OCI-LY7 (cell line): ENCODE measurements at regions of chr7 and their contacts with region 1.

Region 1: DNA sequence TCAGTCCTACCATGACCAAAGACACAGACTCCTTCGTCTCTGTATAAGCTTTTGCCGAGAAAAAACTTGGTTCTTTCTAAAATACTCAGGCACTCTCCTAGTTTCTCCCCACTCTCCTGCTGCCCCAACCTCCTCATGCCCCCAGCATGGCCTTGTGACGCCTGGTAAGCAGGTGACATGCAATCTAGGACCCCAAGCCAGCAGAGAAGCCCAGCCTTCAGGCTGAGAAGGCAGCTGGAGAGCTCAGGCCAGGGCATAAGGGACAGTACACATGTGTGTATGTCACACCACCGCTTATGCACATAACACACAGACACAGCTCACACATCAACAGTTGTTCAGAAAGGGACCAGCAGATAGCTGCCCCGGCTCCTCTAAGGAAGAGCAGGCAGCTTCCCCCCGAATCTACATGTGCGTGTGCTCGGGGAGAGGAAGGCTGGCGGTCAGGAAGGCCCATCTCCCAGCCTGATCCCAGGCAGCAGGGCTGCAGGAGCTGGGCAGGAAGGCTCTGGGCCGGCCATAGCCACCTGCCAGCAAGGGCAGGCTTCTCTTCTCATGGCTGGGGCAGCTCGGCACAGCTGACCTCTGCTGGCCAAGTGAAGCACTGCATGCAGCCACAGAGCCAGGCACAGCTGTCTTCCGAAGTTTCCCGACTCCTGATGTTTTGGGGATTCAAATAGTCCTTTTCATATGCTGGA is 8.5 kb downstream of the DDX56 start:
- DNase-seq: peak; percentile 65
- H3K4me3 ChIP-seq: no peak overlapping the region
- H3K27ac ChIP-seq: no peak overlapping the region
- H3K4me1 ChIP-seq: no peaks in the 10 kb centered on the region
- CTCF ChIP-seq: peak; percentile 94

Region 2: DNA sequence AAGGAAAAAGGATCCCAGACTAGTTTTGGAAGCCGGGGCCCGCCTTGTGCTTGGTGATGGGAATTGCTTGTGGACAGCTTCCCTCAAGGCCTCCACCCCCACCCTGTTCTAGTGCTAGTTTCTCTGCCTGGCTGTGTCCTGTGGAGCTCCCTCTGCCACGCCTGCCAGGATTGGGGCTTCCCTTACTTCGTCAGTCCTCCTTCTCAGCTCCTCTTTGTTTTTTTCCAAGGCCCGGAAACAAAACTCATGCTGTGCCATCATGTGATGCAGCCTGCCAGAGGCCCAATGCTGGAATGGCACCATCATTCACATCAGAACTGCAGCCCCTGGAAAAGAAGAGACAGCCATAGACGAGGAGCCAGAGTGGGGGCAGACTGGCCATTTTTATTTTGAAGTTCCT is 353.2 kb before region 1 on chr7:
- CTCF ChIA-PET with region 1: no interaction called
- POLR2A ChIA-PET with region 1: no interaction called
- intact Hi-C with region 1: no loop called
- DNase-seq: no peak
- H3K4me3 ChIP-seq: no peak overlapping the region
- H3K27ac ChIP-seq: no peak overlapping the region
- H3K4me1 ChIP-seq: peaks cover 14% of the 10 kb centered on the region
- CTCF ChIP-seq: no peak

Region 3: GRCh38 chr7:44240983-44241510 is 324.2 kb before region 1 on chr7:
- CTCF ChIA-PET with region 1: interaction called, 8 read pairs
- POLR2A ChIA-PET with region 1: interaction called, 4 read pairs
- intact Hi-C with region 1: loop called (anchors 1 kb)
- DNase-seq: peak; percentile 91
- H3K4me3 ChIP-seq: no peak overlapping the region
- H3K27ac ChIP-seq: no peak overlapping the region
- H3K4me1 ChIP-seq: peaks cover 4% of the 10 kb centered on the region
- CTCF ChIP-seq: peak; percentile 91

Region 4: DNA sequence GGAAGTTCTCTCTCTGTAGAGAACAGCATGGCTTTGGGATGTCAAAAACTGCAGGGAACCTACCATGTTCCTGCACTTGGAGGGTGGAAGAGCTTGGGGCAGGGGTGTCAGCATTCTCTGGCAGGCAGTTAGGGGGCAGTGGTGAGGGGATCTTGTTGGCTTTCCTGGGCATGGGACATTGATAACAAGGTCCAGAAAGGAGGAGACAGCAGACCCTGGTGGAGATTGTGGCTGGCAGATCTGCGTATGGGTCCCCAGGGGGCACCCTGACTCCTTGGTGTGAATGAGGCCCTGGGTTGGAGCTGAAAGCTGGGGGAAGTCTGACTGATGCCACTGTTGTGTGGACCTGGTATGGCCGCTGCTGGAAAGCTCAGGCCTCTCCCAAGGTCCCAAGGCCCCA is 216.9 kb before region 1 on chr7:
- CTCF ChIA-PET with region 1: no interaction called
- POLR2A ChIA-PET with region 1: no interaction called
- intact Hi-C with region 1: loop called (anchors 1 kb)
- DNase-seq: peak; percentile 73
- H3K4me3 ChIP-seq: no peak overlapping the region
- H3K27ac ChIP-seq: no peak overlapping the region
- H3K4me1 ChIP-seq: no peaks in the 10 kb centered on the region
- CTCF ChIP-seq: peak; percentile 80

Region 5: DNA sequence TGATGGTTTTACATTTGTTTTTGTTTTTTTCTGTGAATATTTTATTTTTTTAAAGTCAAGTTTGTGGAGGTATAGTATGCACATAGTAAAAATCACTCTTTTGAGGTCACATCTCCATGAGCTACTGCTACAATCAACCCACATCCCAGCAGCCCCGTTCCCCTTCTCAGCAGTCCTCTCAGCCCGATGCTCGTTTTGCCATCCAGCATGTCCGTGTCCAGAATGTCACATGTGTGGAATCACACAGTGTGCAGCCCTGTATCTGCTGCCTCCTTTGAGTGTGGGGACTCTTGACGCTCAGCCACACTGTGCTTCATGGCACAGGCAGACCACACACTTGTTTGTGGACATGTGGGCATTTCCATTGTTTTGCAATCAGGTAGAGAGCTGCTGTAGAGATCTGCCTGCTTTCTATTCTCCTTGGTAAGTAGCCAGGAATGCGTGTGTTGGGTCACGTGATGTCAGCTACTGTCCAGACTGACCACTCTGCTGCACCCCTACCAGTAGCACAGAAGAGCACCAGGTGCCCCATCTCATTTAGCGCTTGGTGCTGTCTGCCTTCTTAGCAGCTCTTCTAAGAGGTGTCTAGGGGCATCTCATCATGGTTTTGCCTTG is 168.2 kb before region 1 on chr7:
- CTCF ChIA-PET with region 1: no interaction called
- POLR2A ChIA-PET with region 1: no interaction called
- intact Hi-C with region 1: no loop called
- DNase-seq: no peak
- H3K4me3 ChIP-seq: no peak overlapping the region
- H3K27ac ChIP-seq: no peak overlapping the region
- H3K4me1 ChIP-seq: no peaks in the 10 kb centered on the region
- CTCF ChIP-seq: no peak

Region 6: GRCh38 chr7:44469461-44470134 is 95.6 kb before region 1 on chr7:
- CTCF ChIA-PET with region 1: no interaction called
- POLR2A ChIA-PET with region 1: no interaction called
- intact Hi-C with region 1: no loop called
- DNase-seq: no peak
- H3K4me3 ChIP-seq: no peak overlapping the region
- H3K27ac ChIP-seq: no peak overlapping the region
- H3K4me1 ChIP-seq: peaks cover 29% of the 10 kb centered on the region
- CTCF ChIP-seq: no peak

Region 7: DNA sequence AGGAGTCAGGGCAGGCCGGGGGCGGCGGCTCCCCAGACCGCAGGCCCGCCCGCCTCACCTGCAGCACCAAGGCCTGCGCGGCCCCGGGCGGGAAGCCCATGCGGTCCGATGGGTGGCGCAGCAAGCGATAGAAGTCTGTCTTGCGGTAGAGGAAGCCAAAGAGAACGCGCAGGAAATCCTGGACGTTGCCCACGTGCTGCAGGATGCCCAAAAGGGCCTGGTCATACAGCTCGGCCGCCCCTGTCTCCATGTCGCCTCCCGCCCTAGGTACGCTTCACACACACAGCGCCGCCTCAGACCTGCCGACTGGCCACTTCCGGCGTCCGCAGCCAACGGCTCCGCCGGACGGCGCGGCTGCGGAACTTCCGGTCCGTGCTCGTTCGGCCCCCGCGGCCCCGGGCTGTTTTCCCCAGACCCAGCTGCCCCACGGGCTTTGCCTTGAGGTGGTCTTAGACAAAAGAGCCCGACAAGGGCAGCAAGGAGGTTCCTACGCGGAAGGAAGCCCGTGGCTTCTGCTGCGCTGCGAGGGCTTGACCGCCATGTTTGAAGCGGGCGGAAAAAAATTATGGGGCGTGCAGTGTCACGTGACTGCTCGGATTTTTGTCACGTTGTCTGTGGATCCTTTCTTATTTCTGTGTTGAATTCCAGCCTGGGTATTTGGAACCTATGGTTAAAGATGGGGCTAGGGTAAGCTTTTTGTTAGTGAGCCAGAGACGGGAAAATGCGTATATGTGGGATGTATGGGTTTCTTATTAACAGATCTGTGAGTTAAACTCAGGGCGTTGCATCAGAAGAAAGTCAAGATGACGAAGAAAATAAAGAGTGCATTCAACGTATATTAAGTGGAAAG is 74.7 kb before region 1 on chr7 and contains the start of gene NUDCD3:
- CTCF ChIA-PET with region 1: no interaction called
- POLR2A ChIA-PET with region 1: interaction called, 5 read pairs
- intact Hi-C with region 1: loop called (anchors 5 kb)
- DNase-seq: peak; percentile 92
- H3K4me3 ChIP-seq: peak within 1 kb of the TSS; percentile 94
- H3K27ac ChIP-seq: peak within 1 kb of the TSS; percentile 83
- H3K4me1 ChIP-seq: peaks cover 33% of the 10 kb centered on the region
- CTCF ChIP-seq: peak; percentile 59; the same call in 1 of the 2 replicates
- total RNA-seq, gene NUDCD3: 57.0 and 67.4 TPM in 2 replicates

Region 8: DNA sequence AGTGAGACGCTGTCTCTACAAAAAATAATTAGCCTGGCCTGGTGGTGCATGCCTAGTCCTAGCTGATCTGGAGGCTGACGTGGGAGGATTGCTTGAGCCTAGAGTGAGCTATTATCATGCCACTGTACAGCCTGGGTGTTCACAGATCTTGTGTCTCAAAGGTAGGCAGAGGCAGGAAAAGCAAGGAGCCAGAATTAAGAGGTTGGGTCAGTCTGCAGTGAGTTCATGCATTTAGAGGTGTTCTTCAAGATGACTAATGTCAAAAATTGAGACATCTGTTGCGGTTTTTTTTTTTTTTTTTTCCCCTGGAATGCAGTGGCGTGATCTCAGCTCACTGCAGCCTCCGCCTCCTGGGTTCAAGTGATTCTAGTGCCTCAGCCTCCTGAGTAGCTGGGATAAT is 236.6 kb after region 1 on chr7:
- CTCF ChIA-PET with region 1: no interaction called
- POLR2A ChIA-PET with region 1: no interaction called
- intact Hi-C with region 1: no loop called
- DNase-seq: no peak
- H3K4me3 ChIP-seq: no peak overlapping the region
- H3K27ac ChIP-seq: no peak overlapping the region
- H3K4me1 ChIP-seq: peaks cover 12% of the 10 kb centered on the region
- CTCF ChIP-seq: no peak